ENCODE measurements at regions of chr6 and their contacts with region 1.

Region 1: DNA sequence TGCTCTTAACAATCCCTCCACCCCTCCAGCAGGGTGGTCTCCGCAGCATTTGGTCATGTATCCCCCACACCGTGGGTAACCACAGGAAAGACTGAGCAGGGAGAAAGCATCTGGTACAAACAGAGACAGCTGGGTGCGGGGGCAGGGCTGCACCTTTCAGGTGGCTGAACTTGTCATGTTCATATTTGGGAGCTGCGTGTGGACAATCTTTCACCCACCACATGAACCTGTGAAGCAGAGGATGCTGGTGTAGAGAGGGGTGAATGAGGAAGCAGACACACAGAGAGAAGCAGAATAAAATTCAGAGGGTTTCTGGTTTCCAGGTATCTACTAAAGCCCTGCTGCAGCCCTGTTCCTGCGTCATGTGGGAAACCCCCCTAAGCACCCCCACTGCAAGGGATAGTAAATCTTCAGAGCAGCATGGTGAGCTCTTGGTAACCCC is 8.9 kb downstream of the GFOD1 start:
- DNase-seq: no peak
- ATAC-seq: peak; percentile 56
- H3K4me3 ChIP-seq: 0 out of 2 replicates have a peak overlapping the region, but pooled peaks have one; percentile 1
- H3K27ac ChIP-seq: peak overlapping the region; percentile 63
- H3K4me1 ChIP-seq: peaks cover 48% of the 10 kb centered on the region
- H3K27me3 ChIP-seq: no peaks in the 10 kb centered on the region
- CTCF ChIP-seq: no peak
- EP300 ChIP-seq: no peak
- POLR2A ChIP-seq: no peak
- RAD21 ChIP-seq: no peak

Region 2: DNA sequence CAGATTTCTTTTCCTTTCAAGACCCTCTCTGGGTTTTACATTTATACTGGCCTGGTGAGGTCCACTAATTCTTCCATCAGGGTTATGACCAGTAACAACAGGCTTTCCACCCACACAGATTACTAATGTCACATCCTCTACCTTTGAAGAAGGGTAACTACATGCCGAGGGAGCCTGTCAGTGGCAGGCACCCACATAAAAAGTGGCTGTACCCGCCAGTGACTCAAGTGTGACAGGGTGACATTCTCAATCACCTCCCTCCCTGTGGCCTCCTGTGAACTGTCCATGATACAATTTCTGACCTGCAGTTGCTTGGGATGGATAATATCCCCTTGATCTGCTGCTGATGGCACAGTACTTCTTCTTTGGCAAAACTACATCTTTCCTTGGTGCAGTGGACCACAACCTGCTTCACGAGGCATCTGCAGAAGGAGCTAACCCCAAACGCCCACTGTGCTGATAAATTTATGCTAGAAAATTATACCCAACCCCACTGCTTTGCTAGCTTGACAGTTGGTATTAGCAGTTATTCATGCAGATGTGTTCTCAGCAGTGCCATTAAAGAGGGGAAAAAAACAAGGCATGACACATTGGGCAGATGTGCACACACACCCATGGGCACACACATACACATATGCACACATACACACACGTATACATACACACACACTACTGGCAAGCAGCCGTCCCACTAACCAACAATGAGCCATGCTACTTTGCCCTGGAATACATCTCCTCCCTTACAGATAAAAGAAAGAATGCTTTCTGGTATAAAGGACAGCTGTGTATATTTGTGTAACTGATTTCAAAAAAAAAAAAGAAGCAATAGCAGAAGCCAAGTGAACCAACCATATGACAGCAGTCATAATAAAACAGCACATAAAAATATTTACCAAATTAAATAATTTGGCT is 12.0 kb before region 1 on chr6:
- CTCF ChIA-PET with region 1: interaction called, 8 read pairs
- POLR2A ChIA-PET with region 1: interaction called, 8 read pairs
- RAD21 ChIA-PET with region 1: interaction called, 4 read pairs
- SMC1A ChIA-PET with region 1: interaction called, 55 read pairs
- in situ Hi-C with region 1: no loop called
- intact Hi-C with region 1: no loop called
- DNase-seq: no peak
- ATAC-seq: peak; percentile 73
- H3K4me3 ChIP-seq: no peak overlapping the region
- H3K27ac ChIP-seq: peak overlapping the region; percentile 41; the same call in 1 of the 2 replicates
- H3K4me1 ChIP-seq: peaks cover 46% of the 10 kb centered on the region
- H3K27me3 ChIP-seq: no peaks in the 10 kb centered on the region
- CTCF ChIP-seq: no peak
- EP300 ChIP-seq: no peak
- POLR2A ChIP-seq: no peak
- RAD21 ChIP-seq: no peak